HAP-1 (cell line): ENCODE measurements at regions of chrX and their contacts with region 1.

Region 1: GRCh38 chrX:134377537-134377936 is 82.4 kb upstream of the HPRT1 start:
- DNase-seq: peak; percentile 63 to 78
- H3K4me3 ChIP-seq: no peak overlapping the region
- H3K4me1 ChIP-seq: peaks cover 28% of the 10 kb centered on the region
- H3K27me3 ChIP-seq: no peaks in the 10 kb centered on the region

Region 2: GRCh38 chrX:133792198-133792953 is 585.2 kb before region 1 on chrX:
- in situ Hi-C with region 1: loop called (anchors 25 kb)
- DNase-seq: peak; percentile 93 to 94
- H3K4me3 ChIP-seq: no peak overlapping the region
- H3K4me1 ChIP-seq: peaks cover 30% of the 10 kb centered on the region
- H3K27me3 ChIP-seq: no peaks in the 10 kb centered on the region

Region 3: DNA sequence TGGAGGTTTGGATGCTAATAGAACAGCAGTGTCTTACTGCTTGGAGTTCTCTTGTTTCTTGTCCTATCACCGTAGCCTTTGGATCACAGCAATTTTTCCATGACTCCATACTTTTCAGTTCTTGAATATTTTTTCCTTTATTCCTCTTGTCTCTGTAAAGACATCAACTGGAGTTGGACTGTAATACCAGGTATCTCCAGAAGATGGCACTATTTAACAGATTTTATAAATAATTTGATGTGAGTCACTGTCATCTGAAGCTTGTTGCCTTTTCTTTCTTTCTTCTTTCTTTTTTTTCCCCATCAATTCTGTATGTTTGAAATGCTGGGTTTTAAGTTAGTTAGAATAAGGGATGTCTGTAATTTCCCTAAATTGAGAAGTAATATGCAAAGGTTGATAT is 106.5 kb after region 1 on chrX:
- in situ Hi-C with region 1: loop called (anchors 25 kb)
- DNase-seq: peak in 1 of 2 experiments; percentile 62
- H3K4me3 ChIP-seq: no peak overlapping the region
- H3K4me1 ChIP-seq: peaks cover 9% of the 10 kb centered on the region
- H3K27me3 ChIP-seq: no peaks in the 10 kb centered on the region